GM13976 (cell line): ENCODE measurements at regions of chr22 and their contacts with region 1.

Region 1: DNA sequence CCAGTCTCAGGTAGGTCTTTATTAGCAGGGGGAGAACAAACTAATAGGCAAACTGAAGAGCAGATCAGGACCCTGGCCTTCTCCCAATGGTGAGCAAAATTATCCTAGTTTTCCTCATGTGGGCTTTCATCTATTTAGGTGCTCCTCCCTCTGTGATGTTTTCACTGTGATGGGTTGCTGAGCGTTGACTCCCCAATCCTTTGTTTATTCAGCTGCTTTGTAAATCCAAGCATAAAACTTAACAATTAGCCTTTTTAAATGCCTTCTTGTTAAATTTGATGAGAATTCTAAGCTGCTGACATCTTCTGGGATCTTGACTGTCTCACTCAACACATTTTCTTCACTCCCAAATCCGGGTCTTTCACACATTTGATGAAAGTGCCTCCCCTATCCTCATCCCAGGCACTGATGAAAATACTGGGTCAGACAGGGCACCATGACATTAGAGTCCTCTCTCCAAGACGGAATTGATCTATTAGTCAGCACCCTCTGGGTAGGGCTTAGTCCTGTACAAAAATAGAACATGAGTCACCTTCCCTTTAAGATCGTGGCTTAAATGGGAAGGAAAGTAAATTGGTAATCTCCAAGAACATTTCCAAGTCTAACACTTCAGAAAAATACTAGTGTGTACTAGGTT is 199.3 kb upstream of the ISX start:
- DNase-seq: no peak
- CTCF ChIP-seq: no peak

Region 2: DNA sequence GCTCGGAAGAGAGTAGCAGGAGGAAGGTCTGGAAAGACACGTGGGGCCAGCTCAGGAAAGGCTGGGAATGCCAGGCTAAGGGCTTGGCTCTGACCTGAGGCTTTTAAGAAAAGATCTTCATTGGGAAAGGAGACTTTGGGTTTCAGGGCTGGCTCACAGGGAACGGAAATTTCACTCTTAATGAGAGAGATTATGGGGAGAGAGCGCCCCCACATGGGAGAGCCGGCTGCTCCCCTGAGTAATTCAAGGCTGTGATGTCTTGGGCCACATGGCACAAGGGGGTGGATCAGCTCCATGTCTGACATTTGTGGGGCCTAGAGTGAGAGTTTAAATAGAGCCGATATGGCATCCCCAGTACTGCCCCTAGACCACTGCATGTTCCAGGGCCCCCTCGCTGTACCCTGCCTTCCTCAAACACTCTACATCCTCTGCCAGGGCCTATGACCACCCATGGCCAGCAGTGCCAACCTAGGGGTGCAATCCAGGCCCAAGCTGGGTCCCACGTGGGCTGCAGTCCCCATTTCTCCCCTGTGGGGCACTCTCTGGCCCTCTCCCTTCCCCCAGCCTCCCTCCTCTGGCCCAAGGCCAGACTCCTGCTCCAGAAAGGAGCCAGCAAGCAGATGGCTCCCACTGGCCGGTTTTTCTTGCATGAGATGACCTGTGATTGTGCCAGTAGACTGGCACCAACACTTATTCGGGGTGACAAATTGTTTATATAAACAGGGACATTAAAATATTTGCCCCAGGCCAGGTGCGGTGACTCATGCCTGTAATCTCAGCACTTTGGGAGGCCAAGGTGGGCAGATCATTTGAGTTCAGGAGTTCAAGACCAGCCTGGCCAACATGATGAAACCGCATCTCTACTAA is 274.5 kb after region 1 on chr22:
- in situ Hi-C with region 1: loop called (anchors 25 kb)
- DNase-seq: peak; percentile 73
- CTCF ChIP-seq: peak; percentile 40